IMR-90 (cell line): ENCODE measurements at regions of chr6 and their contacts with region 1.

Region 1: GRCh38 chr6:118923035-118923434 is 11.9 kb downstream of the MCM9 start:
- DNase-seq: no peak
- ATAC-seq: no peak
- H3K4me3 ChIP-seq: no peak overlapping the region
- H3K27ac ChIP-seq: no peak overlapping the region
- H3K4me1 ChIP-seq: 0 out of 2 replicates have a peak, but pooled peaks cover 2% of the 10 kb centered on the region
- H3K27me3 ChIP-seq: no peaks in the 10 kb centered on the region
- CTCF ChIP-seq: no peak
- POLR2A ChIP-seq: no peak
- RAD21 ChIP-seq: no peak

Region 2: GRCh38 chr6:119110601-119111548 is 187.8 kb after region 1 on chr6:
- CTCF ChIA-PET with region 1: interaction called, 6 read pairs
- POLR2A ChIA-PET with region 1: interaction called, 12 read pairs
- dilution Hi-C with region 1: no loop called
- in situ Hi-C with region 1: no loop called
- intact Hi-C with region 1: no loop called
- DNase-seq: peak; percentile 56
- ATAC-seq: peak; percentile 85
- H3K4me3 ChIP-seq: no peak overlapping the region
- H3K27ac ChIP-seq: no peak overlapping the region
- H3K4me1 ChIP-seq: no peaks in the 10 kb centered on the region
- H3K27me3 ChIP-seq: peaks cover 5% of the 10 kb centered on the region; the same call in 1 of the 2 replicates
- CTCF ChIP-seq: peak; percentile 64
- POLR2A ChIP-seq: no peak
- RAD21 ChIP-seq: peak; percentile 71